ENCODE measurements at regions of chr15 and their contacts with region 1.

Region 1: DNA sequence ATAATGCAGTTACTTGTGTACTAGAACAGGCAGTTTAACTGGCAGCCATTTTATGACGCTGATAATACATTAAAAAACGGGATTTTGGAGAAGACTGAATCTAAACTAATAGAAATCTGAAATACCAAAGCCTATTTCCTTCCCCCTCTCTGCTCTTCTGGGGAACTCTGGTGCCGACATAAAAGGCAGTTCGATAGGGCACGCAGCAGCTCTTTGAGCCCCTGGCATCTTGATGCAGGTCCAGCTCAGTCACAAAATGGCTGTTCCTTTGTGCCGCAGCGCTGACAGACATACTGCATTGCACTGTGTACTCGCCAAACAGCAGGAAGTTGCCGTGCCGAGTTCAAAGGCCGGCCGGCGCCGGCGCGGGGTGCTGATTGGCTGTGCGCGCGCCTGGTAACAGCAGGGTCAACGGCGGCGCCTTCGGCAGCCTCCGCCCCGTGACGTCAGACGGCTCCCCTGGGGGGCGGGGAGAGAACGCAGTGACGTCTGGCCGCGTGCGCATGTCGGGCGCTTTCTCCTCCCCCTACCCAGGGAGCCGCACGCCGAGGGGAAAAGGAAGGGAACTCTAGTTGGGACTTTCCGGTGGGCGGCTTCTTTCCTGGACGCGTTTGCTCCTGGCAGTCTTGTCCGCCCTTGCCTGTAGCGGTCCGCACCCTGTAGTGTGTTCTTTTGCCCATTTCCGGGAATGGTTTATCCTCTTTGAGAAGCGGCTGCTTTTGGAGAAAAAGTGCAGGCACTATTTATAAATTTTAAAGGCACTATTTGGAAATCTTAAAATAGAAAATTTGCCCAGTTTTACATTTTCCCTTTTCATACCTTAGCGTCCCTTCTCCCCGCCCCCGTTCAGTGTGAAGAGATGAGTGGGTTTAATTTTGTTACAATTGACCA is 4.1 kb downstream of the CHD2 start:
- H3K4me3 ChIP-seq: peak overlapping the region; percentile 82
- H3K27ac ChIP-seq: peak overlapping the region; percentile 95
- H3K4me1 ChIP-seq: peaks cover 49% of the 10 kb centered on the region
- CTCF ChIP-seq: no peak

Region 2: DNA sequence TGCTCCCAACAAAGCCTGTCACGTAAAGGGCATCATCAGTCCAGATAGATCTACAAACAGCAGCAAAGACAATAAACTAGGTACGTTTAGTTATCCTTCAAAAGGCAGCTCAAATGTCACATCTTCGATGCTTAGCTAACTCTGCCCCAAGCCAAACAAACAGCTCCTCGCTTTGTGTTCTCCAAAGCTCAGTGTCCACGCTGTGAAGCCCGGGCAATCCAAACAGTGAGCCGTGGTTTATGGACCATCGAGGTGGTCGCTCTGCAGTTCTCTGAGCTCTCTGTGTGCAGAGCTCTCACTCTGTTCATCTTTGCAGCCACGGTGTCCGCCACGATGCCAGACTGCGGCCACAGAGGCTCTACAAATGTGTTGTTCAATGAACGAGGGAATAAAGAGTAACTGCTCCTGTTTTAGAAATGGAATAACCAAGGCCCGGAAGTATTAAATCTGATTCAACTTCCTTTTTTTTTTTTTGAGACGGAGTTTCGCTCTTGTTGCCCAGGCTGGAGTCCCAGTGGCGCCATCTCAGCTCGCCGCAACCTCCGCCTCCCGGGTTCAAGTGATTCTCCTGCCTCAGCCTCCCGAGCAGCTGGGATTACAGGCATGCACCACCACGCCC is 131.5 kb before region 1 on chr15:
- CTCF ChIA-PET with region 1: no interaction called
- POLR2A ChIA-PET with region 1: no interaction called
- H3K4me3 ChIP-seq: no peak overlapping the region
- H3K27ac ChIP-seq: no peak overlapping the region
- H3K4me1 ChIP-seq: no peaks in the 10 kb centered on the region
- CTCF ChIP-seq: no peak

Region 3: GRCh38 chr15:92808978-92809879 is 95.0 kb before region 1 on chr15:
- CTCF ChIA-PET with region 1: interaction called, 17 read pairs
- POLR2A ChIA-PET with region 1: interaction called, 130 read pairs
- H3K4me3 ChIP-seq: peak overlapping the region; percentile 48
- H3K27ac ChIP-seq: peak overlapping the region; percentile 97
- H3K4me1 ChIP-seq: peaks cover 28% of the 10 kb centered on the region
- CTCF ChIP-seq: peak; percentile 93; the same call in 1 of the 2 replicates

Region 4: DNA sequence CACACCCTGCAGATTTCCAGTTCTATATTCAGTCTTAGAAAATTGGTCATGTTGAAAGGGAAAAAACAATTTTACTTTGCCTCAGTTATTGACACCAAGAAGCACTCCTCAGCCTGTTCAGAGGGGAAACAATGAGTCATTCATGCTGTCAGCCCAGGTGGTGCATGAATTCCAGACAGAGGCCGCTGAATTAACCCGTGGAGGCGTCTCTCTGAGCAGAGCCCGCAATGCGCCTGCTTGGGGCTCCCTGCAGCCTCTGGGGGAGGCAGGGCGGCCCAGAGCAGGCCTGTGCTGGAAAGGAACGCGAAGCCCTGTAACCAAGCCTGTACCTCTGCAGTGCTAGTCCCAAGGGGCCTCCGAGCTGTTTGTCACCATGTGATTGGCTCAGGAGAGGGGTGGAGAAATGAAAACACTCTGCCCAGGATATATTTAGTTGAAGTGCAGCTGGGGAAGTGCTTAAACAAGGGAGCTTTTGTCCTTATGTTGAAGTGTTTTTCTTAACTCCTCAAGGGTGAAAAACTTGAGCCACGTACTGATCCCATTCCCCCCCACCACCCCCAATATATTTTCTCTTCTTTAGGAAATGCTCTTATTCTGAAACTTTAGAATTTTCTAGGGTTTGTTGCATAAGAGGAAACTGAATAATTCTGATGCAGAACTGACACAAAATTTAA is 72.4 kb before region 1 on chr15:
- CTCF ChIA-PET with region 1: interaction called, 6 read pairs
- POLR2A ChIA-PET with region 1: interaction called, 15 read pairs
- H3K4me3 ChIP-seq: peak overlapping the region; percentile 4
- H3K27ac ChIP-seq: peak overlapping the region; percentile 89
- H3K4me1 ChIP-seq: peaks cover 29% of the 10 kb centered on the region
- CTCF ChIP-seq: no peak

Region 5: DNA sequence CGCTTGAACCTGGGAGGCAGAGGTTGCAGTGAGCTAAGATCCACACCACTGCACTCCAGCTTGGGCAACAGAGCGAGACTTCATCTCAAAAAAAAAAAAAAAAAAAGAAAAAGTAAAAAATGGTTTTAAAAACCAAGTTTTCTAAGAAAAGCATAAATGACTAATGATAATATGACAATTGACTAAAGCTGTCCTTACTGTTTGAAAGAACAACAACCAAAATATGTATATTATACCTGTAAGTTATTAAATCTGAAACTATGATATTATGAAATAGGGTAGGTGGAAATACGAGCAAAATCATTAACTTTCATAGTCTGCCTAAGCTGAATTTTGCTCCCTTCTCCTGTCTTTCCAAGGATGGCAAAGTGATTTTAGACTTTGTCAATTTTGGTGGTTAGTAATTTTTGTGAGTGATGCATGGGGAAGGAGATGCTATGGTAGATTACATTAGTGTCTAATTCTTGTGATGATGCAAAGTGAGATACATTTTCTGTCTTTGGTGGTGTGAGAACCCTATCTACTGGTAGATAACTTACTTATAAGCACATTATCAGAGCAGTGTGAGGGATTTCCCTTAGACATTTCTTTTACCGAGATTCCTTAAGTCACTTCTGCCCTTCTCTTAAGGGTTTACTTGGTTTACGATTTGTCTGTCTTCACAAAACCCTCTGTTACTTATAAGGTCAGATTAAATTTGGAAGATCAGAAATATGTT is 14.6 kb before region 1 on chr15:
- CTCF ChIA-PET with region 1: interaction called, 10 read pairs
- POLR2A ChIA-PET with region 1: interaction called, 226 read pairs
- H3K4me3 ChIP-seq: no peak overlapping the region
- H3K27ac ChIP-seq: no peak overlapping the region
- H3K4me1 ChIP-seq: peaks cover 25% of the 10 kb centered on the region; the same call in 1 of the 2 replicates
- CTCF ChIP-seq: no peak